ENCODE measurements at regions of chrX and their contacts with region 1.

Region 1: GRCh38 chrX:70444326-70444945 is at the start of gene DLG3:
- DNase-seq: no peak
- H3K4me3 ChIP-seq: peak within 1 kb of the TSS; percentile 44 to 50
- H3K27ac ChIP-seq: no peak within 1 kb of the TSS
- H3K4me1 ChIP-seq: peaks cover 0 to 13% (median 6%) of the 10 kb centered on the region in 4 donors
- H3K27me3 ChIP-seq: peaks cover 0 to 8% of the 10 kb centered on the region in 2 donors
- CTCF ChIP-seq: no peak

Region 2: DNA sequence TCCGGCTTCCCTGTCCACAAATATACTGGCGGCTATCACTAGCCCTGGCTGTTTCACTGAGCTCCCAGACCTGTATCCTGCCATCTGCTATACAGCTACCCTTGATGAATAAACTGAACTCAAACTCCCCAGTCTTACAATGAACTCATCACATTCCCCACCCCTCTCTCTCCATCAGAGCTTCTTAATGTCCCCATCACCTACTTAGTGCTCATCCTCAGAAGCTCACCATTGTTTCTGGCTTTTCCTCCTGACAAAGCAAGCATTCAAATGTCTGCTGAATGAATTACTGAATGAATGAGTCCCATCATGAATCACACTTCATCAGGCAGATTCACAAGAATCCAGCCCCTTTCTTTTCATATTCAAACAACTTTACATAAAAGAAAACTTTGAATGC is 272.8 kb before region 1 on chrX:
- intact Hi-C with region 1: loop called (anchors 5 kb)
- DNase-seq: no peak
- H3K4me3 ChIP-seq: no peak overlapping the region
- H3K27ac ChIP-seq: no peak overlapping the region
- H3K4me1 ChIP-seq: peaks cover 0 to 10% (median 0%) of the 10 kb centered on the region in 4 donors
- H3K27me3 ChIP-seq: no peaks in the 10 kb centered on the region
- CTCF ChIP-seq: no peak

Region 3: GRCh38 chrX:70504772-70505450 is 60.5 kb after region 1 on chrX:
- intact Hi-C with region 1: loop called (anchors 5 kb)
- DNase-seq: no peak
- H3K4me3 ChIP-seq: no peak overlapping the region
- H3K27ac ChIP-seq: no peak overlapping the region
- H3K4me1 ChIP-seq: no peaks in the 10 kb centered on the region
- H3K27me3 ChIP-seq: no peaks in the 10 kb centered on the region
- CTCF ChIP-seq: no peak